RWPE1 (cell line): ENCODE measurements at regions of chr1 and their contacts with region 1.

Region 1: GRCh38 chr1:203038891-203039608 is 12.8 kb downstream of the PPFIA4 start:
- DNase-seq: peak; percentile 89
- H3K27ac ChIP-seq: peak overlapping the region; percentile 69
- CTCF ChIP-seq: peak; percentile 91

Region 2: DNA sequence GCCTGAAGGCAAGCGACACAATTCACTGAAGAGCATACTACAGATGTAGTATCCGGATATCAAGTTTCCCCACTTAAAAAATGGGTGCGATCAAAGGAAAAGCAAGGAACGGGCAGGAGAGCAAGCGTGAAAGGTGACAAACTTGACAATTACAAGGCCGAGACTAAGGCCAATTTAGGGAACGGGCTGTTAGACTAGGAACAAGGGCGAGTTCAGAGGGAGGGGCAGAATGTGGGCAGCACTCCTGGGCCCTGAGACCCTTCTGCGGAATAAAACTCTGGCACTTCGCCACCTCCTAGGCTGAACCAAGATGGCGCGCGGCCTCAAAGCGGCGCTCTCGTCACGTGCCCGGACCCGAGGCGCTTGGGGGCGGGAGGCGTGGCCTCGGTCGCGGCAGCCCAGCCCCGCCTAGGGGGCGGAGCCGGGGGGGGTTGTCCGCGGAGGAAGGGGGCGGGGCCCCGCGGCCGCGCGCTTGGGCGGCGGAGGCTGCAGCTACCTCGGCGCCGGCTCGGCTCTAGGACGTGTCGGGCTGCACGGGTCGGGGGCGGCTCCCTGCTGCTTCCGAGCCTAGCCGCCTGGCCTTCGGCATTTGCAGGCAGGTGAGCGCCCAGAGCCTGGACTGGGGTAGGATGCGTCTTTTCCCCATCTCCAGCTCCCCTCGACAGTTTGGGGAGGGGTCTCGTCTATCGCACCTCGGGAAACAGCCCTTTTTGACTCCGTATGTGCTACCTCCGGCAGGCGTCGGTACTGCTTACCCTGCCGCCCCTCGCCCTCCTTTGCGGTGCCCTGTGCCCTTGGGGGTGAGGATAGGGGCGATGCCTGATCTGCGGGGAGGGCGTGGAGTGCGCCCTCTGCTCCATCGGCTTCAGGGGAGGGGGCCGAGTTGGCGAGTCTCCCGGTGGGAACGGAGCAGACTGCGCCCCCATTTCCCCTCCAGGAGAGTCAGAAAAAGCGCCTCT is 12.7 kb before region 1 on chr1 and contains the start of gene PPFIA4:
- CTCF ChIA-PET with region 1: interaction called, 20 read pairs
- POLR2A ChIA-PET with region 1: no interaction called
- DNase-seq: peak; percentile 99
- H3K27ac ChIP-seq: peak within 1 kb of the TSS; percentile 42; the same call in 1 of the 2 replicates
- CTCF ChIP-seq: peak; percentile 23; the same call in 1 of the 2 replicates

Region 3: GRCh38 chr1:203117611-203118575 is 78.8 kb after region 1 on chr1:
- CTCF ChIA-PET with region 1: interaction called, 30 read pairs
- POLR2A ChIA-PET with region 1: no interaction called
- DNase-seq: peak; percentile 83
- H3K27ac ChIP-seq: no peak overlapping the region
- CTCF ChIP-seq: peak; percentile 60

Region 4: DNA sequence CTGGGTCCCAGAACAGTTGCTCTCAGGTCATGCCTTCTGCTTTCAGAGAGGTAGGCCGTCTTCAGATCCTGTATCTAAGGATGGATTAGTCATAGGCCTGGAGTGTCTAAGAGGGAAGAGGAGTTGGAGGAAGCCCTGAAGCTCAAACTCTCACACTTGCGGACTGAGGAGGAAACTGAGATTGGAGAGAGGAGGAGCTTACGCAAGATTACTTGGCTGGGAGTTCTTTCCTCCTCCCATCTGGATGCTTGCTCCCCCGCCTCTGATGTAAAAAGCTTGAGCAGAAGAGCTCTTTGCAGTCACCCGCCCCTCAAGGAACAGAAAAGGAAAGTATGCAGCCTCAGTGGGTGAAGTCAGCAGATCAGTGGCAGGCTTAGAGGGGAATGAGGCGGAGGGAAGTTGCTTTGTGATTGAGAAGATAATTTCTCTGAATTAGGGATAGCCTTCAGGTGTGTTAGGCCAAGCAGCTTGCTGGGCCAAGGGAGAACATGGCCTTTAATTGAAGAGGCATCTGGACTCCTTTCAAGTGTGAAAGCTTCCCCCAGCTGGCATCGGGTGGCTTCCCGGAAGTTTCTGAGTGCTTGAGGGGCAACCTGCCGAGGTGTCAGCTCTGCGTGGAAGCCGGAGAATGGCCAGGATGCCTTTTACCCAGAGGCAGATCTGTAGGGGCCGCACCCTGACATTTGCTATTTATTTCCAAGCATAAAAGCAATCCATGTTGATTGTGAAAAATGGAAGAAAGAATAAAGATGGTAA is 95.1 kb after region 1 on chr1:
- CTCF ChIA-PET with region 1: interaction called, 29 read pairs
- POLR2A ChIA-PET with region 1: no interaction called
- DNase-seq: no peak
- H3K27ac ChIP-seq: no peak overlapping the region
- CTCF ChIP-seq: no peak

Region 5: DNA sequence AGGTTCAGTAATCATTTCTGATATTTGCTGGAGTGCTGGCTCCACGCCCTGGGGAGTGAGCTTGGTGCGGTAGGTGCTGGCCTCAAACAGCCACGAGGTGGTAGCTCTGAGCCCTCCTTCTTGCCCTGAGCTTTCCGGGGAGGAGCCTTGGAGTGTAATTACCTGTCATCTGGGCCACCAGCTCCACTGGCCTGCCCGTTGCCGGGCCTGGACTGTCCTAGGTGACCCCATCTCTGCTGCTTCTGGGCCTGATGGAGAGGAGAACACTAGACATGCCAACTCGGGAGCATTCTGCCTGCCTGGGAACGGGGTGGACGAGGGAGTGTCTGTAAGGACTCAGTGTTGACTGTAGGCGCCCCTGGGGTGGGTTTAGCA is 127.5 kb after region 1 on chr1:
- CTCF ChIA-PET with region 1: interaction called, 84 read pairs
- POLR2A ChIA-PET with region 1: no interaction called
- DNase-seq: peak; percentile 46
- H3K27ac ChIP-seq: no peak overlapping the region
- CTCF ChIP-seq: no peak

Region 6: DNA sequence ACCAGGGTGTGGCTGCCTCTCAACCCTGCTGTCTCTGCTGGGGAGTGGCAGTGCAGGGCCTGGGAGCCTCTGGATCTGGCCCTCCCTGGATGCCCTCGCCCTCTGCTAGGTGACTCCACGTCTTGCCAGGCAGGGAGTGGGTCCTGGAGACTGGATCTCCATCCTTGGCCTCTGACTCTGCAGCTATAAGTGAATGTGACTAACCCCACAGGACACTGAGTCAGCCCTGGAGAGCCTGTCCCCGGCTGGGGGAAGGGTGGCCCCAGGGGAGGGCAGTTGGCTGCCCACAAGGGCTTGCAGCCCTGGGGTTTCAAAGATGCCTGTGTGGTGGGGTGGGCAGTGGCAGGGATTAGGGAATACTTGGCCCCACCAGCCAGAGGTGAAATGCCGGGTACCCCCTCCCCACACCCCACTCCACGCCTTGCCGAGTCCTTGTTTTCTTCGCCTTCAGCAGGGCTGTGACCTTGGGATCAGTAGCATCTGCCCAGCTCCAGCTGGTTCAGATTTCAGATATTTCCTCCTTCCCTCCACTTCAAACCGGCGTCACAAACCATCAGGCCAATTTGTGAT is 138.5 kb after region 1 on chr1:
- CTCF ChIA-PET with region 1: interaction called, 84 read pairs
- POLR2A ChIA-PET with region 1: no interaction called
- DNase-seq: no peak
- H3K27ac ChIP-seq: no peak overlapping the region
- CTCF ChIP-seq: no peak

Region 7: DNA sequence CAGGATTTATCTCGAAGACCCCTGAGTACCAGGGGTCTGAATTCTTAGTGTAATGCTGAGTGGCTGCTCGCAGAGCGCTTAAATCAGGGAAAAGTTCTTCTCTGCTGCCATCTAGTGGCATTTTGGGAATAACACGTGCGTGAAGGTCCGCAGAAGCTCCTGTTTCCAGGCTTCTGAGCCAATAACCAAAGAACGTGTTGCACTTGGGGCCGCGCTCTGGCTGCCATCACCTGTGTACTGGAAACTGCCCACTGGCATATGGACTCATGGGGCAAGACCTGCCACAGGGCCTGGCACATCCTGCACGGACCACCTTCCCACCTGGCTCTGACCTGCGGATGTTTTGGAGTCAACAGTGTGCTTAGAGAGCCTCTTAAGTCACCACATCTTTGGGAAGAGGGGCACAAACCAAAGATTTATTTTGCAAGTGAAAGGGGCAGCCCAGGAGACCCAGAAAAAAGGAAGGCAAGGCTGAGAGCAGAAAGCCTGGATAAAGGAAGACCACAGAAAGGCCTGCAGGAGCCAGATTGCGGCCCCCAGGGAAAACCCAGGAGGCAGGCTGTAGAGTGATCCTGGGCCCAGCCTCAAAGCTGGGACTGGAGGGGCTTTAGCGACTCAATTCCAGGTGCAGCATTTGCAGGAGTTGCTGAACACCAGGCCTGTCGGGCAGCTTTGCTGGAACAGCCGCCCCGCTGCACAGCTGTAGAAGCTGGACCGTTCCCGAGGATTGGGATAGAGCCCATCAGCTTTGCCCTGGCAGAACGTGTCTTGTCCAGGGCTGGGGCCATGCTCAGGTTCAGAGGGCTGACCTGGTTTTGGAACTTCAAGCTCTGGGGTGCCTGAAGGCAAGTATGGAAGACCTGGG is 177.5 kb after region 1 on chr1:
- CTCF ChIA-PET with region 1: interaction called, 197 read pairs
- POLR2A ChIA-PET with region 1: no interaction called
- DNase-seq: peak; percentile 77
- H3K27ac ChIP-seq: no peak overlapping the region
- CTCF ChIP-seq: peak; percentile 72